ENCODE measurements at regions of chr5 and their contacts with region 1.

Region 1: GRCh38 chr5:96614110-96614691 is 48.0 kb upstream of the CAST start:
- DNase-seq: peak; percentile 44
- ATAC-seq: peak; percentile 87 to 93

Region 2: GRCh38 chr5:96657087-96657665 is 43.0 kb after region 1 on chr5:
- intact Hi-C with region 1: loop called in 1 of 2 experiments (anchors 5 kb)
- DNase-seq: no peak
- ATAC-seq: peak in 1 of 2 donors; percentile 55

Region 3: DNA sequence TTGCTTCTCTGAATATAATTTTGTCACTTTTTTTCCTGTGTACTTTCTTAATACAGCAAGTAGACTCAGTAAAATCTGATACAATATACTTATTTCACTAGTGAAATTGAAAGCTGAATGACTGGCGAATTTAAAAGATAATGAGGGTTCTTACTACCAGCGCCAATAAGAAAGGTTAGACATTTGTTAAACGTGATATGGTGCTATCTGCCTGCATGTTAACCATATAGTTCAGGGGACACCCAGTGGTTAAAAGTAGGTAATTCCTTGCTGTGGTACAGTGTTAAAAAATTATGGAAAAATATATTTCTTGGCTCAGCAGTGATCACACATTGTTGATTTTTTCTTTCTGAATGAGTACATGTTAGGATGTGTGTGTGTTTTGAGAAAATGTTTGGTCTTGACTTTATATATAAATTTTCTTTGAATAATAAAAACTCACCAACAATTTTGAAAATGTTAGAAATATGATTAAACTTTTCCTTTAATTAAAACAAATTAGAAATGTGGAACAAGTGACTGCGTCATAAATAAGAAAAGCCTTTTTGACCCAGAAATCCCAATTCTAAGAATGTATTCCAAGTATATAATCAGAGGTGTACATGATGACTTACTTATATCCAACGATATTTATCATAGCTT is 73.7 kb after region 1 on chr5:
- intact Hi-C with region 1: loop called (anchors 2 to 10 kb)
- DNase-seq: no peak
- ATAC-seq: peak; percentile 82

Region 4: DNA sequence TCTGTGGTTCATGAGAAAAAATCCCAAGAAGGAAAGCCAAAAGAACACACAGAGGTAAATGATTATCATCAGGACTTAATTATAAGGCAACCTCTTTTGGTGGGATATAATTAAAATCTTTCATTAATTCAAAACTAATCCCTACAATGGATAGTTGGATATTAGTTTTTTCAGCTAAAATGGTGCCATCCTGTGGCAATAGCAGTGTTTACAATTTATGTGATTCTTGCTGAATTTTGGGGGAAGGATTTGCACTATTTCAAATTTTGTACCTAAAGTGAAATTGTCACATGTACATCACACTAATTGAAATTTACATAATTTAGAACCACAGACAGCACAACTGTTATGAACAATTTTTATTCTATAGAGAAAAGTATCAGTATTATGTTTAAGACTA is 115.0 kb after region 1 on chr5:
- intact Hi-C with region 1: loop called in 1 of 2 experiments (anchors 10 kb)
- DNase-seq: no peak
- ATAC-seq: no peak

Region 5: GRCh38 chr5:96743065-96743768 is 129.0 kb after region 1 on chr5:
- intact Hi-C with region 1: loop called in 1 of 2 experiments (anchors 10 kb)
- DNase-seq: peak; percentile 49
- ATAC-seq: peak; percentile 32 to 80

Region 6: DNA sequence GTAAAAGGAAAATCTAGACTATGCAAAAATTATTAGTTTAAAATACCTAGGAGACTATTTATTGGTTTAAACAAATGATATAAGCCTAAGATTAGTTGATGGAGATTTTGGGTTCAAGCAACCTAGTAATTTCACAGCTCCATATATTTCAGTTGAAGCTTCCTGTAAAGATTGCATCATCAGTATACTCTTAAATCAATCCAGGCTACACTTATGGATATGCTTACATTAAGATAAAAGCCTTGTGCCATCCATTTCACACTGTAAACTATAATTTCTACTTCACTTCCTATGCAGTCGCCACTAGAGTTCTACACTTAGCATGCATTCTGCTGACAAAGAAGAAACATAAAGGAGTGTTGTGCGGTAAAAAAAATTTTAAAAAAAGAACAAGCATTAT is 535.5 kb after region 1 on chr5:
- intact Hi-C with region 1: loop called in 1 of 2 experiments (anchors 10 kb)
- DNase-seq: no peak
- ATAC-seq: no peak